ENCODE measurements at regions of chr14 and their contacts with region 1.

Region 1: DNA sequence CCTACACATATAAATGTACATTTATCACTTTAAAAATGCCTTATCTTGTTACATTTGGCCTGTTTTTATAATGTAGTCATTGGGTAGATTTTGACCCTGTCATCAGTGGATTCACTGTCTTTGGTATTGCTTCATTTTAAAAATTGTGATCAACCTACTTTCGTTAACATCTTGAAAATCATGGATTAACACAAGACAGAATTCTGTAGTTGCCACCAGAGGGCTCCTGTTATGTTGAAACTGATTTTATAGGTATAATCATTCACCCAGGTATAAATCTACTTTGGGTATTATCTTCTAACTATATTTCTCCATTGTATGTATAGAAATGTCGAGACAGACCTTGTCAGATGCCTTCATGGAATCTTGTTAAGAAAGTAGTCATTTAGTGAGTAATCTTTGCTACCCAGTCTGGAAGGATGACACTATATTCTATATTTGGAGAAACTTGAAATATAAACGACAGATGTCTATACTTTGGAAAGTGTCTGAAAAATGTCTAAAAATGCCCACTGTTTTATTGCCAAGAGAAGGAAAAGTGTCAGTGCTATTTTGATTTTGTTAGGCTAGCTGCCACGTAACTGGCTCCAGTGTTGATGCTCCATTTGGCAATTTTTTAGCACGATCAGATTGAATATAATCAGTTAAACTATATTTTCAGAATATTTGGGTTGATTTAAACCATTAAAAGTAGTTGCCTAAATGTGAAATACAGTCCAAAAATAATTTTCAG is 129.4 kb downstream of the PELI2 start:
- DNase-seq: no peak

Region 2: DNA sequence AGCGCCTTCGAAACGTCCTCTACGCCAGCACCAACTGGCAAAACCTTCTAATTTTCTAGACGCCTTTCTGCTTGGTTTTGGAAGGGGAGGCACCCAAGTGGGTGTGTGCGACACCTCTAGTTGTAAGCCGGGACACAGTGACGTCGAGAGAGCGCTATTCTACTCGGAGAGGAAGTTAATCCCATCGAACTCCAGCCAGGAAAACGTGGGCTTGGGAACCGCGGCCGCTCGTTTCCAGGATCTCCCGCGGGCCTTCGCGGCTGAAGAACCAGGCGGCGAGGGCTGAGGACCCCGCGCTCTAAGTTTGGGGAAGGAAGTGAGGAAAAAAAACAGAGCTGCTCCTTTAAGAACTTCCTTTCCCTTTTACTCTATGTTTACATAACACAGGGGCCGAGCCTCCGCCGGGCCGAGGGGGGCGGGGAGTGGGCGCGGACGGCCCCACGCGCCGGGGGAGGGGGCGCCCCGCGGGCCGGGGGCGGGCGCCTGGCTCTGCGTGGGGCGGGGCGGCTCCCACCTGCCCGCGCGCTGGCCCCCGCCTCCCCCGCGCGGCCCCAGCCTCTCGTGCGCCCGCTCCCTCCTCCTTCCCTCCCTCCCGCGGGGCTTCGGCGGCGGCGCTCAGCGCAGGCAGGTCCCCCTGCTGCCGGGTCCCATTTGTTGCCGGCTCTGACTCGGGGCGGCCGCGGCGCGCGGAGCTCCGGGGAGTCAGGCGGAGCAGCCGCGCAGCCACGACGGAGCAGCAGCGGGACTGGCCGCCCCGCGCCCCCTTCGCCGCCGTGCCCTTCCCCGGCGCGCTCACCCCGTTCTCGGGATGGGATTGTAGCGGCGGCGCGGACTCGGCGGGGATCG is 129.6 kb before region 1 on chr14 and contains the start of gene PELI2:
- intact Hi-C with region 1: no loop called
- DNase-seq: peak; percentile 94
- total RNA-seq, gene PELI2: 16.0 to 17.5 TPM

Region 3: GRCh38 chr14:56280843-56281242 is 33.2 kb after region 1 on chr14:
- intact Hi-C with region 1: loop called in 1 of 2 experiments (anchors 1 kb)
- DNase-seq: no peak